Thyroid gland (tissue), 4 donors: ENCODE measurements at regions of chr17 and their contacts with region 1.

Region 1: GRCh38 chr17:58112970-58113631 is 29.9 kb downstream of the DYNLL2 start:
- DNase-seq: peak; percentile 79 to 81
- H3K4me3 ChIP-seq: no peak overlapping the region
- H3K27ac ChIP-seq: no peak overlapping the region
- H3K4me1 ChIP-seq: no peaks in the 10 kb centered on the region
- H3K27me3 ChIP-seq: no peaks in the 10 kb centered on the region
- CTCF ChIP-seq: peak; percentile 80 to 96 (median 95)
- POLR2A ChIP-seq: no peak

Region 2: GRCh38 chr17:57121338-57122042 is 991.6 kb before region 1 on chr17:
- intact Hi-C with region 1: loop called (anchors 10 kb)
- DNase-seq: peak; percentile 34 to 39
- H3K4me3 ChIP-seq: no peak overlapping the region
- H3K27ac ChIP-seq: no peak overlapping the region
- H3K4me1 ChIP-seq: no peaks in the 10 kb centered on the region
- H3K27me3 ChIP-seq: no peaks in the 10 kb centered on the region
- CTCF ChIP-seq: peak in 1 of 6 experiments; percentile 23
- POLR2A ChIP-seq: no peak

Region 3: GRCh38 chr17:57855391-57856035 is 257.6 kb before region 1 on chr17:
- intact Hi-C with region 1: loop called (anchors 5 kb)
- DNase-seq: no peak
- H3K4me3 ChIP-seq: no peak overlapping the region
- H3K27ac ChIP-seq: no peak overlapping the region
- H3K4me1 ChIP-seq: peaks cover 7 to 36% of the 10 kb centered on the region in 2 donors
- H3K27me3 ChIP-seq: no peaks in the 10 kb centered on the region
- CTCF ChIP-seq: no peak
- POLR2A ChIP-seq: no peak

Region 4: GRCh38 chr17:58006924-58007780 is 105.9 kb before region 1 on chr17 and contains the start of gene SRSF1:
- intact Hi-C with region 1: loop called (anchors 5 kb)
- DNase-seq: peak; percentile 96 to 97
- H3K4me3 ChIP-seq: peak within 1 kb of the TSS; percentile 87 to 100 (median 98)
- H3K27ac ChIP-seq: peak within 1 kb of the TSS; percentile 92 to 99 (median 99)
- H3K4me1 ChIP-seq: peaks cover 17 to 24% of the 10 kb centered on the region in 2 donors
- H3K27me3 ChIP-seq: no peaks in the 10 kb centered on the region
- CTCF ChIP-seq: peak in 1 of 6 experiments; percentile 3
- POLR2A ChIP-seq: peak; percentile 85 to 96
- total RNA-seq, gene SRSF1: 181 to 266 (median 214) TPM